Activated CD4-positive, alpha-beta T cell treated with anti-CD3 and anti-CD28 coated beads for 36 hours (primary cell): ENCODE measurements at regions of chr15 and their contacts with region 1.

Region 1: GRCh38 chr15:50145451-50145872 is 26.4 kb upstream of the ATP8B4 start:
- DNase-seq: no peak
- ATAC-seq: no peak
- H3K4me3 Mint-ChIP-seq: no peak overlapping the region
- H3K27ac Mint-ChIP-seq: no peak overlapping the region
- H3K4me1 Mint-ChIP-seq: peaks cover 32% of the 10 kb centered on the region
- H3K27me3 Mint-ChIP-seq: no peaks in the 10 kb centered on the region

Region 2: DNA sequence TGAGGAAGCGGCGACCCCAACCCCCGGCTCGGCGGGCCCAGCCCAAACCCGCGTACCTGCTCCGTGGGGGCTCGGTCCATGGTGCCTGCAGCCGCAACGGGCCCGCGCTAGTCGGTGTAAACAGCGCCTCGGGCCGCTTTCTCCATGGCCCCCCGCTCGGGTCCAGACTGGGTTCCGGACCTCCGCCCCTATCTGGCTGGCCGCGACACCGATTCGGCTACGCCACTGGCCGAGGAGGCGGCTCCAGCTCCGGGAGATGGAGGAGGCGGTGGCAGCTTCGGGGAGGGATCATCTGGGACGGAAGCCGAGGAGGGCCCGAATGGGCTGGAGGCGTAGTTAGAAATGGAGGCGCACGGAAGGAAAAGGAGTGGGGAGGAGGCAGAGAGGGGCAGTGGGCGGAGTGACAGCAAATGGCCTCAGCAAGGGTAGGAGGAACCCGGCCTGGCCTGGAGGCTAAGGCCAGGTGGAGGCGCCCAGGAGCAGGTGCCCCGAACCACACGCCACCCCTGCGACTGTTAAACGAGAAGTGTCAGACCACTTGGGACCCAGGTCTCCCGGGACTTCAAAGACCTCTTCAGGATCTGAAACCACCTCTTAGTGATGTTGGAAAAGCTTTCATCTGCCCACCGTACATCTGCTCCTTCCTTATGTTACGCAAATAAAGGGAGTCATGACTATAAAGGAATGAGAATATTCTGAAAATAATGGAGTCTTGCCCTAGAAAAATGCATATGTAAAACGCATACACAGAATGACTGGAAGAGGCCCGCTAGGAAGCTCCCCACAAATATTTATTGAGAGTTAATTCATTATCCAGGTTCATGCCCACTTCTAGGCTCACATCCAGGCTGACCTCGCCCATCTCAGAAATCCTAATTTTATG is 1099.0 kb before region 1 on chr15 and contains the start of gene SECISBP2L:
- CTCF ChIA-PET with region 1: no interaction called
- POLR2A ChIA-PET with region 1: no interaction called
- intact Hi-C with region 1: loop called in 1 of 2 experiments (anchors 10 kb)
- DNase-seq: peak; percentile 95
- ATAC-seq: peak; percentile 97
- H3K4me3 Mint-ChIP-seq: peak within 1 kb of the TSS; percentile 92
- H3K27ac Mint-ChIP-seq: peak within 1 kb of the TSS; percentile 84
- H3K4me1 Mint-ChIP-seq: peaks cover 22% of the 10 kb centered on the region
- H3K27me3 Mint-ChIP-seq: no peaks in the 10 kb centered on the region
- total RNA-seq, gene SECISBP2L: 22.4 to 36.8 TPM

Region 3: GRCh38 chr15:49235446-49236124 is 909.9 kb before region 1 on chr15:
- CTCF ChIA-PET with region 1: interaction called, 3 read pairs
- POLR2A ChIA-PET with region 1: no interaction called
- intact Hi-C with region 1: loop called (anchors 1 kb)
- DNase-seq: peak; percentile 60
- ATAC-seq: peak; percentile 80
- H3K4me3 Mint-ChIP-seq: no peak overlapping the region
- H3K27ac Mint-ChIP-seq: no peak overlapping the region
- H3K4me1 Mint-ChIP-seq: peaks cover 4% of the 10 kb centered on the region
- H3K27me3 Mint-ChIP-seq: no peaks in the 10 kb centered on the region

Region 4: DNA sequence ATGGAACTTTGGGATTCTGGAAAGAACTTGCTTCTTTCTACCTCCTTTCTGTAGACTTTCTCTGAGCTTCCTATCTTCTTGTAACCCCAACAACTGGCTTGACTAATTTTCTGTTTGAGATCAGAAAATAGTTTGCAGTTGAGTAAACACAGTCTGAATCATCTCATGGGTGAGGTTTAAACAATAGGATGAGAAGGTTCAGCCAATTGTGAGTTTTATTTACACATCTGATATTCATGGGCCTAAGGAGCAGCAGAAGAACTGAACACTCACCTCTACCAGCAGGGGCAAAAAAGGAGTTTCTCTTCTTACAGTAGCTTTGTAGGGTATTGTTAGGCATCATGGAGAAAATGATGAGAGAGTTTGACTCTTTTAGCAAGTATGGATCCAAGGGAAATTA is 470.4 kb before region 1 on chr15:
- CTCF ChIA-PET with region 1: no interaction called
- POLR2A ChIA-PET with region 1: interaction called, 3 read pairs
- intact Hi-C with region 1: loop called in 1 of 2 experiments (anchors 10 kb)
- DNase-seq: no peak
- ATAC-seq: no peak
- H3K4me3 Mint-ChIP-seq: no peak overlapping the region
- H3K27ac Mint-ChIP-seq: no peak overlapping the region
- H3K4me1 Mint-ChIP-seq: no peaks in the 10 kb centered on the region
- H3K27me3 Mint-ChIP-seq: peaks cover 7% of the 10 kb centered on the region